Mammary epithelial cell (primary cell): ENCODE measurements at regions of chr7 and their contacts with region 1.

Region 1: DNA sequence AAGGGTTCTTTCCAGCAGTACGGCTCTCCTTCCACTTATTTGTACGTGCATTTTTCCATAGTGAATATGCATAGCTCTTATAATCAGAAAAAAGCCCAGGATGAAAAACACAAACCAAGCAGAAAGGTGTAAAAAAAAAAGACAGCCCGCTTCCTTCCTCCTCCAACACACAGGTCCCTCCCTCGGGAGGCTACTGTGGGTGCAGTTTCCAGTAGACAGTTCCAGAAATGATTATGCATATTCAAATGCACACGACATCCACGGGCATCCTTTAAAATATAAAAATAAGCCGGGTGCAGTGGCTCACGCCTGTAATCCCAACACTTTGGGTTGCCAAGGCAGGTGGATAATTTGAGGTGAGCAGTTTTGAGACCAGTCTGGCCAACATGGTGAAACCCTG is 59.9 kb downstream of the TNRC18 start:
- DNase-seq: no peak
- H3K4me3 ChIP-seq: no peak overlapping the region
- H3K27ac ChIP-seq: no peak overlapping the region
- H3K4me1 ChIP-seq: no peaks in the 10 kb centered on the region
- H3K27me3 ChIP-seq: no peaks in the 10 kb centered on the region
- CTCF ChIP-seq: no peak

Region 2: DNA sequence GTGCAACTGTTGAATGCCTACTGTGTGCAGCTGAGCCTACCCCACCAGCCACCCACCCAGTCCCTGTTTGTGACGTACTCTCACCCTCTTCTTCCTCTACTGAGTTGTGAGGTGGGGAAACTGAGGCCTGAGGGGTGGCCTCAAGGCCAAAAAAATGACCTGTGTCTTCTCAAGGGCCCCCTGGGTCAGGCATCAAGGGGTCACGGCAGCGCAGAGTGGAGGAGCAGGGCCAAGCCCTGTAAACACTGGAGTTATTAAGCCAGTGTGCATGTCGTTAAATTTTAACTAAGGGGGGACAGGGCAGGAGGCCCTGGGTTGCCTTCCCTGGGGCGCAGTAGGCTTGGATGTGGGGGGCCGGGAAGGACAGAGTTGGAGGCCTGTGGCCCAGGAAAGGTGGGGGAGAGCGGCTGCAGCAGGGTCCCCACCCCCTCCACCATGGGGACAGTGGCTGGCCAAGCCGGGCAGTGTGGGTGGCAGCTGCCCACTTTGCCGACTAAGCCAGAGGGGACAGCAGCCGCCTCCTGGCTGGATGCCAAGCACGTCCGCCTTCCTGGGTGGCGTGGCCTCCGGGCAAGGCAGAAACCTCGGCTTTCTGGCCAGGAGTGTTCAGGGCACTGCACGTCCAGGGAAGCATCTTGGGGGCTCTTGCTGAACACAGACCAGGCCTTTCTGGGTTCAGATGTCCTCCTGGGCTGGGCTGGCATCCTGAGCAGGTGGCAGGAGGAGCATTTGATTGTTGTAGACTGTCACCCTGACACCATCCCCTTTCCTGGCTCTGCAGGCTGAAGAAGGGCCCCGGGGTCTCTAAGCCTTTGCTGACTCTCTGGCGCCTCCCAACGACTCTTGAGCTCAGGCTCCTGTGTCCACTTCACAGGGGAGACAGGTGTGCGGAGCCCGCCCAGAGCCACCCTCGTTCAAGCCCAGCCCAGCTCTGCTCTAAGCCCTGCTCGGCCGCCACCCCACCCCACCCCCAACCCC is 79.1 kb before region 1 on chr7:
- CTCF ChIA-PET with region 1: no interaction called
- dilution Hi-C with region 1: no loop called
- in situ Hi-C with region 1: no loop called
- intact Hi-C with region 1: no loop called
- DNase-seq: no peak
- H3K4me3 ChIP-seq: no peak overlapping the region
- H3K27ac ChIP-seq: no peak overlapping the region
- H3K4me1 ChIP-seq: no peaks in the 10 kb centered on the region
- H3K27me3 ChIP-seq: no peaks in the 10 kb centered on the region
- CTCF ChIP-seq: peak in 1 of 2 donors; percentile 44

Region 3: DNA sequence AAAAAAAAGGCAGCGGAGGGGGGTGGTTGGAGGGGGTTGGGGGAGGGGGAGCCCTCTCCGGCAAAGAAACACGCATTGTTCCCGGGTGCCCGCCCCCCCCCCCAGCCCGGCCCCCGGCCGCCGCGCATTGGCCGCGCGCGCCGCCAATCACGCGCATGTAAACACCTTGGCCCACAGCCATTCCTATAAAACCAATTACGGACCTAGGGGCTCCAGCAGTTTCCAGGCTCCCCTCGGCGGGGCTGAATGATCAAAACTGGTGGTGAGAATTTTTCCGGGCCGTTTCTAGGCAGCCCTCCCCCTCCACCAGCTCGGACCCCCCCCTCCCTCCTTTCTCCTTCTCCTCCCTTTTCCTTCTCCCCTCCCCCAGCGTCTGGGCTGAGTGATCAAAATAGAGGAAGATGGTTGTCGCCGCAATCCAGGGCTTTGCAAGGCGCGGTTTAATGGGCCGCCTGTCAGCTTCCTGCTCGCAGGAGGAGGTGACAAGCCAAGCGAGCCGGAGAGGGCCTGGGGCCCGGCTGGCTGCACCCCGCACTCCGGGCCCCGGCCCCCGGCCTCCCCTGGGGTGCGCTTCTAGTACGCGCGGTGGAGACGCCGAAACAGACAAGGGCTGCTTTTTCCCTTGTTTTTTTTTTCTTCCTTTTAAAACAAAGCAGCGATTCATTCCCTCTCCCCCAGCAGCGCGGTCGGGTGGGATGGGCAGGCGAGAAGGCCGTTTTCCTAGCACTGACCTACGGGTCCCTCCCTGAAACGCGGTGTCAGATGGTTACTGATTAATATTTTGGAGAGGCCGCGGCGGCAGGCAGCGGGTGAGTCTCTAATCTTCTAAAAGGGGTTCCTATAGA is 60.3 kb after region 1 on chr7:
- CTCF ChIA-PET with region 1: no interaction called
- dilution Hi-C with region 1: no loop called
- in situ Hi-C with region 1: no loop called
- intact Hi-C with region 1: loop called (anchors 2 kb)
- DNase-seq: peak; percentile 97
- H3K4me3 ChIP-seq: peak overlapping the region; percentile 72 to 99 (median 91)
- H3K27ac ChIP-seq: peak overlapping the region; percentile 84
- H3K4me1 ChIP-seq: peaks cover 11% of the 10 kb centered on the region
- H3K27me3 ChIP-seq: no peaks in the 10 kb centered on the region
- CTCF ChIP-seq: no peak

Region 4: GRCh38 chr7:5472432-5473315 is 108.9 kb after region 1 on chr7:
- CTCF ChIA-PET with region 1: no interaction called
- dilution Hi-C with region 1: no loop called
- in situ Hi-C with region 1: no loop called
- intact Hi-C with region 1: no loop called
- DNase-seq: no peak
- H3K4me3 ChIP-seq: no peak overlapping the region
- H3K27ac ChIP-seq: no peak overlapping the region
- H3K4me1 ChIP-seq: peaks cover 5% of the 10 kb centered on the region
- H3K27me3 ChIP-seq: no peaks in the 10 kb centered on the region
- CTCF ChIP-seq: peak in 1 of 2 donors; percentile 5